Astrocyte of the cerebellum (primary cell): ENCODE measurements at regions of chr4 and their contacts with region 1.

Region 1: DNA sequence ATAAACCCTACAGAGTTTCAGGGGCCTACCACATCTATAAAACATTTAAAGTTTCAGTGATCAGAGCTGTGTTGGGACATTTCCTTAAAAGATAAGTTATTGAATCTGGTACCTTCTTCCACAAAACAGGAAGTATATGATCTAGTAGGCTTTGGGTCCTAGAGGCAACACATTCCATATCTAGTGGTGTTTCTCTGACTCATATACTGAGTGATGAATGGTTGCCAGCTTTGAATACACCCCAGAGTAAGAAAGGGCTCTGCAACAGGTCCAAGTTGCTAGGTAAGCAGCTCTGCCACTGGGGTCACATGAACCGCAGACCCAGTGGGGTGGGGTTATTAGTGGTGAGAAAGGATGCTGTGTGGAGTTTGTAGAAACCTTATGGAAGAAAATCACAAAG is 32.4 kb upstream of the BLTP1 start:
- DNase-seq: no peak
- H3K4me3 ChIP-seq: no peak overlapping the region
- CTCF ChIP-seq: no peak

Region 2: DNA sequence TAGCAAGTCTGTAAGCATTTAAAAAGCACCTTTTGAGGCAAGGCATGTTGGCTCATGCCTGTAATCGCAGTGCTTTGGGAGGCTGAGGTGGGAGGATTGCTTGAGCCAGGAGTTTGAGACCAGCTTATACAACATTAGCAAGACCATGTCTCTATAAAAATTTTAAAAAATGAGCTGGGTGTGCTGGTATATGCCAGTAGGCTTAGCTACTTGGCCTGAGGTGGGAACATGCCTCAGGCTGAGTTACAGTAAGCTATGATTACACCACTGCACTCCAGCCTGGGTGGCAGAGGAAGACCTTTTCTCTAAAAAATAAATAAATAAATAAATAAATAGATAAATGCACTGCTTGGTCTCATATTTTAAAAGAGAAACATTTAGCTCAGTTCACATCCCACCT is 59.2 kb after region 1 on chr4:
- in situ Hi-C with region 1: loop called (anchors 10 kb)
- DNase-seq: no peak
- H3K4me3 ChIP-seq: no peak overlapping the region
- CTCF ChIP-seq: no peak